Activated naive CD4-positive, alpha-beta T cell treated with anti-CD3 and anti-CD28 coated beads for 36 hours (primary cell): ENCODE measurements at regions of chr6 and their contacts with region 1.

Region 1: DNA sequence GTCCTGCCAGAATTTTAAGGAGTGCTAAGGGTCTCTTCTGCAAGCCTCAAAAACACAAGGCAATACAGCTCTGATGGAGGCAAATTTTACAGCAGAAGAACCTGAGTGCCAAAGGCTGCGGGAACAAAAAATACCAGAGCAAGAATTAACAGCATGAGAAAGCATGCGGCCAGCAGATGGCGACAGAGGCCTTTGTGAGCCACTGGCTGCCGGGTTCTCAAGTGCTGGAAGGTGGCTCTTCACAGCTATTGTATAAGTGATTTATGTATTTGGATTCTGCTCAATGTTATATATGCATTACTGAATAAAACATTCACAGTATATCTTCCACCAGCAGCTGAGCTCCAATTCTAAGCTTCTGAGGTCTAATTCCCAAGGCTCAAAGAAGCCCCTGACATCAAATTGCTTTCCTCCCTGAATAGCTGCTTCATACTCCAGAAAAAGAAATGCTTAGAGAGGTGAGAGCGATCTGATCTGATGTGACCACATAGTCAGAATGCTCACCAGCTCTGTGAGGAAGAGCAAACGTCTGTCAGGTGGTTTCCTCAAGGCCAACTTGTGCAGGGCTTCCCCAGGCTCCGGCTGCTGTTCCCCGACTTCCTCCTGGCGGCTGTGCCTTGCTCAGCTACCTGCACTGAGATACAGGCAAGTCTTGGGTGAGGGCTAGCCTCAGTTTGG is 58.6 kb downstream of the PPP1R3G start:
- DNase-seq: peak; percentile 92
- H3K4me3 Mint-ChIP-seq: no peak overlapping the region
- H3K27ac Mint-ChIP-seq: no peak overlapping the region
- H3K4me1 Mint-ChIP-seq: no peaks in the 10 kb centered on the region
- H3K27me3 Mint-ChIP-seq: no peaks in the 10 kb centered on the region

Region 2: DNA sequence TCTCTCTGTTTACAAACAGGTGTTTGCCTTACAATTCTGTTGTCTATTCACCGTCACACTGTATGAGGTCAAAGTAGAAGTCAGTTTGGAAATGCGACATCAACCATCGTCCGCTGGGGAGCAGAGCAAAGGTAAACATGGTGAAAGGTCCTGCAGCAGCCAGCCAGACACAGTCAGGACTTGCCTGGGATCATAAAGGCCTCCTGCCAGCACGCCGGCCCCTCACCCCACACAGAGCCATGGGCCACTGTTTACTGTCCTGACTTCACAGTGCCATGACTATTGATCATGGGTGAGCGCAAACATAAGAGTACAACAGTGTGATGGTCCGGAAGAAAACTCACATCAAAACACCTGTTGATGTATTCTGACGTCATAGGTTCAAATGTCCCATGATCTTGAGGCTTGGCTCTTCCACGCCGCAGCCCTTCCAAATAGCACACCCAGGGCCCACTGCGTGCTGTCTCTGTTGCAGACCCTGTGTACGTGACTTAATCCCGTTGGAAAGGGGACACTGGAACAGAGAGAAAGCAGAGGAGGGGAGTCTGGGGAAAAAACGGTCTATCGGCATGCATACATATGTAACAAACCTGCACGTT is 75.5 kb before region 1 on chr6:
- CTCF ChIA-PET with region 1: no interaction called
- intact Hi-C with region 1: no loop called
- DNase-seq: no peak
- H3K4me3 Mint-ChIP-seq: no peak overlapping the region
- H3K27ac Mint-ChIP-seq: no peak overlapping the region
- H3K4me1 Mint-ChIP-seq: peaks cover 2% of the 10 kb centered on the region
- H3K27me3 Mint-ChIP-seq: no peaks in the 10 kb centered on the region

Region 3: GRCh38 chr6:5214570-5215052 is 70.8 kb after region 1 on chr6:
- CTCF ChIA-PET with region 1: interaction called, 5 read pairs
- intact Hi-C with region 1: loop called (anchors 5 kb)
- DNase-seq: peak; percentile 51
- H3K4me3 Mint-ChIP-seq: no peak overlapping the region
- H3K27ac Mint-ChIP-seq: no peak overlapping the region
- H3K4me1 Mint-ChIP-seq: peaks cover 4% of the 10 kb centered on the region
- H3K27me3 Mint-ChIP-seq: no peaks in the 10 kb centered on the region

Region 4: GRCh38 chr6:5302995-5303622 is 159.3 kb after region 1 on chr6:
- CTCF ChIA-PET with region 1: interaction called, 26 read pairs
- intact Hi-C with region 1: loop called (anchors 1 kb)
- DNase-seq: peak; percentile 73
- H3K4me3 Mint-ChIP-seq: no peak overlapping the region
- H3K27ac Mint-ChIP-seq: peak overlapping the region; percentile 59
- H3K4me1 Mint-ChIP-seq: peaks cover 36% of the 10 kb centered on the region
- H3K27me3 Mint-ChIP-seq: no peaks in the 10 kb centered on the region

Region 5: GRCh38 chr6:5379647-5380242 is 236.0 kb after region 1 on chr6:
- CTCF ChIA-PET with region 1: interaction called, 18 read pairs
- intact Hi-C with region 1: loop called (anchors 1 kb)
- DNase-seq: peak; percentile 44
- H3K4me3 Mint-ChIP-seq: no peak overlapping the region
- H3K27ac Mint-ChIP-seq: no peak overlapping the region
- H3K4me1 Mint-ChIP-seq: no peaks in the 10 kb centered on the region
- H3K27me3 Mint-ChIP-seq: no peaks in the 10 kb centered on the region

Region 6: DNA sequence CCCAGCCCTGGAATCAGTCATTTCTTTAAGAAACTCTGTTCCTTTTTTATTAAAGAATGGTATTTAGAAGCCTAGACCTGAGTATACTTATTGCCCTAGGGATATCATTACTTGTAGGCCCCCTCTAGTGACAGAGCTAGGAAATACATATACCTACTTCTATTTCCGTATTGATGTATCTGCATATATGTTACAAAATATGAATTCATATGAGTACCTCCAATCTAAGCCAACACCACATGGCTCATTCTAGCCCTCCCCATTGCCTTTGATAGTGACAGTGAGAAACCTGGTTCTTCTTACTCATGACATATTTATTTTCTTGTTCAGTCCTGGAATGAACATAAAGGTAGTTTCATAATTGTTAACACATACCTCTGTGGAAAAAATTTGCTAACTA is 254.8 kb after region 1 on chr6:
- CTCF ChIA-PET with region 1: interaction called, 6 read pairs
- intact Hi-C with region 1: loop called (anchors 1 kb)
- DNase-seq: peak; percentile 64
- H3K4me3 Mint-ChIP-seq: no peak overlapping the region
- H3K27ac Mint-ChIP-seq: no peak overlapping the region
- H3K4me1 Mint-ChIP-seq: peaks cover 22% of the 10 kb centered on the region
- H3K27me3 Mint-ChIP-seq: no peaks in the 10 kb centered on the region